Calu3 (cell line): ENCODE measurements at regions of chr1 and their contacts with region 1.

Region 1: DNA sequence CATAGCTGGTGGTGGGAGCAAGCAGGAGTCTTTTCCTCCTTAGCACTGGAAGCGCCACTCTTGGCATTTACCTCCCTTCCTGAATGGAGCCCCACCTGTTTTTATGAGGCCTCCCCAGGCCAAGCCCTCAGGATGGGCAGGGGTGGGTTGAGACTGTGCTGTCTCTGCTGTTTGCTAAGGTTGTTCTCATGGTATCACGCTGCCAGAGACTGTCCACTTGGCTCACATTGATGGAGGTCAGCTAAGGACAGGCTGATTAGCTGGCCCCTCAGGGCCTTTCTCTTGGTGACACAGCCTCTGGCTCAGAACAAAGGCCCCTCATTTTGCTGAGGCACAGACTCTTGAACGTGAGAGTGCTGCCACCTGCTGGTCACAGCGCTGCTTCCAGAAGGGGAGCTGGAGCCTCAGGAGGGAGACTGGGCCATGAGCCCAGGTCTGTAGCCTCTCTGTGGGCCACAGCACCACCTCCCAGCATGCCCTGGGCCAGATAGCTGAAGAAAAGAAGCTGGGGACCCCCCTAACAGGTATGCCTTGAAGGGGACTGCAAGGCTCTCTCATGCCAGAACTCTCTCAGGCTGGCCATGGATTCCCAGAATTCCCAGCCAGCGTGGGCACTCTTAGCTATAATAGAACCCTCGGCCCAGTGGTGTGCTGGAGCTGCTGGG is 85.6 kb downstream of the CD58 start:
- DNase-seq: peak; percentile 85
- H3K4me3 Mint-ChIP-seq: no peak overlapping the region
- H3K27ac Mint-ChIP-seq: peak overlapping the region; percentile 20
- H3K4me1 Mint-ChIP-seq: peaks cover 26% of the 10 kb centered on the region
- H3K27me3 Mint-ChIP-seq: no peaks in the 10 kb centered on the region
- CTCF ChIP-seq: peak; percentile 87

Region 2: DNA sequence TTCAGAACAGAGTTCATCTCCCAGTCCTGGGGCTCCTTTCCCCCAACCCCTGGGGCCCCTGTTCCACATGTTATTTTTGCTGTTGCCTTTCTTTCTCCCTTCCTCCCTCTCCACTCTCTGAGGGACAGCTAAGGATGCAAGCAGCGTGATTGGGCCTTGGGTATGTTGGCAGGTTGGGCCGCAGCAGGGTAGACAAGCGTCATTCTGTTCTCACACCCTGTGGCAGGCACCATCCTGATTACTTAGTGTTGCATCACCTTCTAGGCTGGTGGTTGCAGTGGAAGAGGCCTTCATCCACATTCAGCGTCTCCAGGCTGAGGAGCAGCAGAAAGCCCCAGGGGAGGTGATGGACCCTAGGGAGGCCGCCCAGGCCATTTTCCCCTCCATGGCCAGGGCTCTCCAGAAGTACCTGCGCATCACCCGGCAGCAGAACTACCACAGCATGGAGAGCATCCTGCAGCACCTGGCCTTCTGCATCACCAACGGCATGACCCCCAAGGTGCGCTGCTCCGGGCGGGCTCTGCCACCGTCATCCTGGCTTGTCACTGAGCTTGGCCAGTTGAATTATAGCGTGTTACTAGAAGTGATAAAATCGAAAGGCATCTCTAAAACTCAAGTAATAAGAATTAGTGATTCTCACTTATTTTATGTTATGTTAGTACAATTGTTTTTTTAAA is 800.0 kb before region 1 on chr1:
- CTCF ChIA-PET with region 1: no interaction called
- intact Hi-C with region 1: no loop called
- DNase-seq: no peak
- H3K4me3 Mint-ChIP-seq: no peak overlapping the region
- H3K27ac Mint-ChIP-seq: no peak overlapping the region
- H3K4me1 Mint-ChIP-seq: no peaks in the 10 kb centered on the region
- H3K27me3 Mint-ChIP-seq: no peaks in the 10 kb centered on the region
- CTCF ChIP-seq: no peak

Region 3: GRCh38 chr1:116139592-116140134 is 345.5 kb before region 1 on chr1:
- CTCF ChIA-PET with region 1: interaction called, 41 read pairs
- intact Hi-C with region 1: loop called (anchors 2 kb)
- DNase-seq: no peak
- H3K4me3 Mint-ChIP-seq: no peak overlapping the region
- H3K27ac Mint-ChIP-seq: no peak overlapping the region
- H3K4me1 Mint-ChIP-seq: peaks cover 9% of the 10 kb centered on the region
- H3K27me3 Mint-ChIP-seq: no peaks in the 10 kb centered on the region
- CTCF ChIP-seq: no peak

Region 4: DNA sequence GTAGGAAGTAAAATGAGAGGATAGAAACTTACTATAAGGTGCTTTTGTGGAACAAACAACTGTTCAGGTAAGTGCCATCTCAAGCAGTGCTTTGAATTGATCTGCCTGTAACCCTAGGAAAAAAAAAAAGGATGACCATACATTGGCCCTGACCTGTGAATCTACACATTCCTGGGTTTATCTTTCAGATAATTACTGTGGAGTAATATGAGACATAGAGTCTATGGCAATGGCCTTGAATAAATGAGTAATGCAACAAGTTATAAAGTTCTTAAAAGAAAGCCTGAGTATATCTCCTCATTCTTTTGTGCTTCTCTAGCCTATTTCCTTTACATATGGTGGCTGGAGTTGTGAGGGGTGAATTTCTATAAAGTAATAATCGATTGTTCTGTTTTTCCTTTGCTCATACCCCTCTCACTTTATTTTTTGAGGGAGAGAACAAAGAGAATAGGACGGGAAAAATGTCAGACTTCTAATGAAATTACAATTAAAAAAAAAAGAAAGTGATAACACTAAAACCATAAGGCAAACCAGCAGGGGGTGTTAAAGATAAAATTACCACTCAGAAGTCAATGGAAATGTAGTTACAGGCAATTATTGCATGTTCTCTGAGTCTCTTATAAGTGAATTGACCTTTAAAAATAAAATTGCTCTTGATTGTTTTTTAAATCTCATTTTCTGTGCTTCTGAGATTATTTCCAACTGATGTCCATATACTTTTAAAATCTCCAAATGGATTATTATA is 124.6 kb before region 1 on chr1:
- CTCF ChIA-PET with region 1: interaction called, 3 read pairs
- intact Hi-C with region 1: loop called (anchors 5 kb)
- DNase-seq: no peak
- H3K4me3 Mint-ChIP-seq: no peak overlapping the region
- H3K27ac Mint-ChIP-seq: no peak overlapping the region
- H3K4me1 Mint-ChIP-seq: no peaks in the 10 kb centered on the region
- H3K27me3 Mint-ChIP-seq: no peaks in the 10 kb centered on the region
- CTCF ChIP-seq: no peak

Region 5: DNA sequence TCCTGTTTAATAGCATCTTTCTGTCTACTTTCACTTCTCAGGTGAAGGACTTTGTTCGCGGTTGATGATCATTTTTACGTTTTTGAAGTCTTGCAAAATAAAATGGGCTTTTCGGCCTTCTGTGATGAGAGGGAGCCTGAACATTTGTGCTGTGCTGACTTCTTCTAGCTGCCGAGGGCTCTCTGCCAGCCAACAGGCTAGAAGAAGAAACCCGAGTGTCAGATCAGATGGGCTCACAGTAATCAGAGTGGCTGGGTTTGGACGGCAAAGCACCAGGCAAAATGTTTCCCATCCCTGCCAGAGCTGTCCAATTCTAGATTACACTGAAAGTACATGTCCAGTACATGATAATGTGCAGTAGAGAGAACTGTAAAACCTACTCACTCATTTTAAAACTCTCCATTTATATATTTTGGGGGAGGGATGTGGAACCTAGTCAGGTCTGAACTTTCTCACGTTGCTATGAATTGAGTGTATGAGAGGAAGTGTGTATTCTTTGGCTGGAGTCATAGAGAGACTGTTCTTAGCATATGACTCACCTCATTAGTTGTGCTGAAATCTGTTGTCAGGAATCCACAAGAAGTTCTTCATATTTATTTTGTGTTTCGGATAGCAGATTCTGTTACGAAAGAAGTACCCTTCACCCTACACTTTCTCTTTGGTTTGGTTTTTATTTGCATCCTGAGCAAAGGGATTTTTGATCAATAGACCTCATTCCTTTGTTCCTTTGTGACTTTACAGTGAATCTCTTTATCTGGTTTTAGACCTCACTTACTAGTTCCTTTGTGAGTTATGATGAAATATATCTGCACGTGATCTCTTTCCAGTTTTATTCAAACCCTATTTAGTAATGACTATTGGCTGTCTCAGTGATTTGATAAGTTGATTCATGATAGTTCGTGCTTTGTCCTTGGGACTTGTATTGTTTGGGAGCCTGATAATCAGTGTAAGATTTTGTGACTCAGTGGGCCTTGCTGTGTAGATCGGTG is 107.4 kb before region 1 on chr1:
- CTCF ChIA-PET with region 1: interaction called, 5 read pairs
- intact Hi-C with region 1: loop called (anchors 5 kb)
- DNase-seq: no peak
- H3K4me3 Mint-ChIP-seq: peak overlapping the region; percentile 79
- H3K27ac Mint-ChIP-seq: peak overlapping the region; percentile 72
- H3K4me1 Mint-ChIP-seq: peaks cover 36% of the 10 kb centered on the region
- H3K27me3 Mint-ChIP-seq: no peaks in the 10 kb centered on the region
- CTCF ChIP-seq: no peak

Region 6: GRCh38 chr1:116418091-116418830 is 66.9 kb before region 1 on chr1:
- CTCF ChIA-PET with region 1: interaction called, 6 read pairs
- intact Hi-C with region 1: loop called (anchors 5 kb)
- DNase-seq: peak; percentile 81
- H3K4me3 Mint-ChIP-seq: peak overlapping the region; percentile 84
- H3K27ac Mint-ChIP-seq: peak overlapping the region; percentile 77
- H3K4me1 Mint-ChIP-seq: no peaks in the 10 kb centered on the region
- H3K27me3 Mint-ChIP-seq: no peaks in the 10 kb centered on the region
- CTCF ChIP-seq: no peak

Region 7: DNA sequence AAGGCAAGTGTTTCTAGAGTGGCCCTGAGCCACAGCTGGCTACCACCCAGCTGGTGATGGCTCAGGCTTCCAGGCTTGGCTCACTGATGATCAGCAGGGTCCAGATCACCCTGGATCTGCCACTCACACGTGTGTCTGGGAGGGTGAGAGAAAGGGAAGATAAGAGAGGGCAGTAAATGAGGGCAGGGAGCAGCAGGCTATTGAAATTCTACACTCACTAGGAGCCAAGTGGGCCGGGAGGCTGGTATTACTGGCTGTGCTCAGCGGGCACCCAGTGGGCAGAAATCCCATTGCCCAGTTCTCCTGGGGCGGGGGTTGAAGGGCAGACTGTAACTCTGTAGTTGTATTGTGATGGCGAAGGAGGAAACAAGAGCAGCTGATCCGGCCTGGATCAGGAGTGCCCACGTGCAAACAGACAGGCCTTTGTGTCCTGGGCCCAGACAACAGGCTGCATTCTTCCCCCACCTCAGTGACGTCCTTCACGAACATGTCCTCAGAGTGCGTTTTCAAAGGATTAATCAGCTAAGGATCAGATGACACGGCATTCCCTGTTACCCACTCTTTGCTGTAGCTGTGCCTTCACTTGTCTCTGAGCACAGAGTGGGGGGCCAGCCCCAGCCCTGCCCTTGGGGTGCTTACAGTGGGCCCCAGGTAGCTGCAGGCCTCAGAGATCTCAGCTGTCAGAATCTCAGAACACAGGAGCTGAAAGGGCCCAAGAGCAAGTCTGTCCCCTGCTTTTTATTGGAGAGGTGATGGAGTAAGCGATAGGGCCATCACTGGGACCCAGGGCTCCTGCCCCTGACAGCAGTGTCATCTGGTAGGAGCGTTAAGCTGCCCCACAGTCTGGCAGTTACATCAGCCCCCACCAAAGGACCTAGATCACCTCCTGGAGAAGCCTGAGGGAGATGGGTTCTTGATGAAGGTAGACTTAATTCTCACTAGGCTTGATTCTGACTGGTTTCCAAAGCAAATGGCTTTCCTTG is 51.6 kb before region 1 on chr1:
- CTCF ChIA-PET with region 1: interaction called, 9 read pairs
- intact Hi-C with region 1: loop called (anchors 2 kb)
- DNase-seq: peak; percentile 86
- H3K4me3 Mint-ChIP-seq: peak overlapping the region; percentile 20
- H3K27ac Mint-ChIP-seq: peak overlapping the region; percentile 85
- H3K4me1 Mint-ChIP-seq: peaks cover 38% of the 10 kb centered on the region
- H3K27me3 Mint-ChIP-seq: no peaks in the 10 kb centered on the region
- CTCF ChIP-seq: no peak

Region 8: DNA sequence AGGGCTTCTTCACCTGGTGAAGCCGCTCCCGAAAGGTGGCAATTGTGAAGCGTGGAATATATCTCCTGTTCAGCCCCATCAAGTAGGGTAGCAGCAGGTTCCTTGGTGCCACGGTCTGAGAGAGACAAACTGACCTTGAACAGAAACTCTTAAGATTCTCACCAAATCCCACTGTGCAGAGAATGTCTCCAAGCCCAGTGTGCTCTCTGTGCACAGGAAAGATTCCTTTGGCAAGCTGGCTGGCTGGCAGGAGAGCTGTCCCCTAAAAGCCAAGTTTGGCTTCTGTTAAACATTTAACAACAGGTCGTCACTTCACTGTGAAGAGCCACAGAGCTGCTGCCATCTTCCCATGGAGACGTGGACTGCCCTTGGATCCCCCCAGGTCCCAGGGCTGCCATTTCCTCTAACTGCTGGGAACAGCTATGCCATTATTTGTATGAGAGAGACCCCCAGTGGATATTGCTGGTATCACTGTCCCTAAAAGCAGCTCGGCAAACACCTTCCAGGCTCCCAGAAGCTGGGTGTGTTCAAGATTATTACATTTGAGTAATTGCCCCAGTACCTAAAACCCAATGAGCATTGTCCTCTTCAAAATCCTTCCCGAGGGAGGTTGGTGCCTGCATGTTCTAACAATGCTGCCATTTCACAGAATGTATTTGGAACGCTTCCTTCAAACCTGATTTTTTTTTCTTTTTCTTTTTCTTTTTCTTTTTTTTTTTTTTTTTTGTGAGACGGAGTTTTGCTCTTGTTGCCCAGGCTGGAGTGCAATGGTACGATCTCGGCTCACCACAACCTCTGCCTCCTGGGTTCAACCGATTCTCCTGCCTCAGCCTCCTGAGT is 13.8 kb after region 1 on chr1:
- CTCF ChIA-PET with region 1: interaction called, 14 read pairs
- intact Hi-C with region 1: no loop called
- DNase-seq: peak; percentile 75
- H3K4me3 Mint-ChIP-seq: no peak overlapping the region
- H3K27ac Mint-ChIP-seq: no peak overlapping the region
- H3K4me1 Mint-ChIP-seq: peaks cover 62% of the 10 kb centered on the region
- H3K27me3 Mint-ChIP-seq: no peaks in the 10 kb centered on the region
- CTCF ChIP-seq: peak; percentile 80

Region 9: GRCh38 chr1:116934586-116935207 is 449.5 kb after region 1 on chr1:
- CTCF ChIA-PET with region 1: no interaction called
- intact Hi-C with region 1: no loop called
- DNase-seq: no peak
- H3K4me3 Mint-ChIP-seq: no peak overlapping the region
- H3K27ac Mint-ChIP-seq: no peak overlapping the region
- H3K4me1 Mint-ChIP-seq: peaks cover 7% of the 10 kb centered on the region
- H3K27me3 Mint-ChIP-seq: no peaks in the 10 kb centered on the region
- CTCF ChIP-seq: peak; percentile 31